ENCODE measurements at regions of chr20 and their contacts with region 1.

Region 1: GRCh38 chr20:14288341-14289330 is 48.8 kb downstream of the FLRT3 start:
- DNase-seq: no peak
- H3K4me3 ChIP-seq: no peak overlapping the region
- H3K27ac ChIP-seq: no peak overlapping the region
- H3K4me1 ChIP-seq: no peaks in the 10 kb centered on the region
- H3K27me3 ChIP-seq: no peaks in the 10 kb centered on the region
- CTCF ChIP-seq: no peak
- POLR2A ChIP-seq: no peak

Region 2: GRCh38 chr20:13029687-13030510 is 1258.7 kb before region 1 on chr20:
- intact Hi-C with region 1: no loop called
- DNase-seq: peak in 1 of 2 donors; percentile 81
- H3K4me3 ChIP-seq: no peak overlapping the region
- H3K27ac ChIP-seq: peak overlapping the region; percentile 13 to 69
- H3K4me1 ChIP-seq: no peaks in the 10 kb centered on the region
- H3K27me3 ChIP-seq: no peaks in the 10 kb centered on the region
- CTCF ChIP-seq: no peak
- POLR2A ChIP-seq: no peak

Region 3: GRCh38 chr20:15784020-15784419 is 1495.4 kb after region 1 on chr20:
- intact Hi-C with region 1: loop called (anchors 5 kb)
- DNase-seq: no peak
- H3K4me3 ChIP-seq: no peak overlapping the region
- H3K27ac ChIP-seq: no peak overlapping the region
- H3K4me1 ChIP-seq: no peaks in the 10 kb centered on the region
- H3K27me3 ChIP-seq: no peaks in the 10 kb centered on the region
- CTCF ChIP-seq: no peak
- POLR2A ChIP-seq: no peak